ENCODE measurements at regions of chr16 and their contacts with region 1.

Region 1: DNA sequence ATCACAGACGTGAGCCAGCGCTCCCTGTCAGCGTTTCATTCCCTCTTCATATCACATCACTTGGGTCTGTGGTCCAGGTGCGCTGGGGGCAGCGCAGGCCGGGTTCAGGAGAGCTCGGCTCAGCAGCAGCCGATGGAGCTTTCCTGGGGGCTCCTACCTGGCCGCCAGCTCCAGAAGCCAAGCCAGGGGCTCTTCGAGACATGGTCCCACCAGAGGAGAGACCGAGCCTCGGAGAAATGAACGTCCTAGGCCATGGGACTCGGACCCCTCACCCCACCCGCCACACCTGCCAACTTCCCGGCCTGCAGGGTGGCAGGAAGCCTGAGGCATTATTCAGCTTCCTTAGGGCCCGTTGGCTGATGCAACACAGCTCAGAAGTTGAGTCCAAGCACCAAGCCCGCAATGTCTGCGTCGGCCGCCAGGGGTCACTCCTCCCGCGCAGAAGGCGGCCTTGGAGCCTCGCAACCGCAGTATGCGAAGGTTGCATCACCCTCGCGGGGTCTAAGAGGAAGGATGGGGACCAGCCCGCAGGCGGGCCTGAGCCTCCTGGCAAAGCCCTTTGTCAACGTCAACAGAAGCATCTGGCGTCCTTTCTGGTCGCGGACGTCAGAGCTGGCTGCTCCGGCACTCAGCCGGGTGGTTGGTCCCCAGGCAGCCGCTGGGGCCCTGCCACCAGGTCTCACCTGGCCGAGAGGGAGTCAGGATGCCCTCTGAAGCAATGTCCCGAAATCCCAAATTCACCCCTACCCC is 13.2 kb upstream of the KLHDC4 start:
- DNase-seq: peak; percentile 98
- ATAC-seq: peak; percentile 80
- H3K4me3 Mint-ChIP-seq: peak overlapping the region; percentile 76
- H3K27ac Mint-ChIP-seq: peak overlapping the region; percentile 98
- H3K4me1 Mint-ChIP-seq: peaks cover 46% of the 10 kb centered on the region
- H3K27me3 Mint-ChIP-seq: no peaks in the 10 kb centered on the region

Region 2: DNA sequence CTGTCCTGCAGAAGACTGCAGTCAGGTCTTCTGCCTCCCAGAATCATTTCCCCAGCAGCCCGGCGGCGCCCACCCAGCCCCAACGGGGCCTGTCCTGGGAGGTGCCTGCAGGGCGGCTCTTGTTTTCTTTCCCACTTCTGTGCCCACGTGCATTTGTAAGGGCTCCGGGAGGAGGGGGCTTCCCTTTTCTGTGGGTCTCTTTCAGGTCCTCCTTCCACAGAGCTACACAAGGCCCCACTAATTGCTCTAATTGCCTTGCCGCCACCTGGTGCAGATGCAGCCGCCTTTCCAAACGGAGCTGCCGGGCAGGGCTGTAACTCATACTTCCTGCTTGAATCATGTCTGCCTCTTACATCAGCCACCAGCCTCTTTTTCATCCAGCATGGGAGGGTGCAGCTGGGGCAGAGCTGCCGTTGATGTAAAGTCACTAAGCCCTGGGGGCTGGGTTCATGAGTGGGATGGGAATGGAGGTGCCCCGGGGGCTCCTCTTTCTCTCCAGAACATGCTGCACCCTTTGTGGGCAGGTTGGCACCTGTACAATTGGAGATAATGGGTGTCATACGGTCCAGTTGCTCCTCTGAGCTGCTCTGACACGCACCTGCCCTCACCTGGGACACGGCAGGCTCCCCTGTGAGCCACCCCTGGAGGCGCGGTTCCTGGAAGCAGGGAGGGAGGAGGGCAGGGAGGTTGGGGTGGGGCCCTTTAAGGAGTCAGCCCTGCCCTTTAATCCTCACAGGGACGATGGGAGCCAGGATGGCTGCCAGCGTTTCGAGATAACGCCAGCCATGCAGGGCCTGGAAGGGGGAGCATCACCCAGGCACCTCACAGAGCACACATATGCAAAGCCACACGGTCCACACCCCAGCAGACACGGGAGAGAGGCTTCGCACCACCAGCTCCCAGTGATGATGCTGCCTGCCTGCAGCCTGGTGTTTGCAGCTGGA is 27.9 kb after region 1 on chr16:
- POLR2A ChIA-PET with region 1: interaction called, 81 read pairs
- DNase-seq: peak; percentile 72
- ATAC-seq: peak; percentile 87
- H3K4me3 Mint-ChIP-seq: peak overlapping the region; percentile 83
- H3K27ac Mint-ChIP-seq: peak overlapping the region; percentile 100
- H3K4me1 Mint-ChIP-seq: peaks cover 29% of the 10 kb centered on the region
- H3K27me3 Mint-ChIP-seq: no peaks in the 10 kb centered on the region

Region 3: GRCh38 chr16:87860553-87861299 is 81.7 kb after region 1 on chr16:
- POLR2A ChIA-PET with region 1: interaction called, 191 read pairs
- DNase-seq: no peak
- ATAC-seq: no peak
- H3K4me3 Mint-ChIP-seq: peak overlapping the region; percentile 35
- H3K27ac Mint-ChIP-seq: peak overlapping the region; percentile 81
- H3K4me1 Mint-ChIP-seq: peaks cover 40% of the 10 kb centered on the region
- H3K27me3 Mint-ChIP-seq: no peaks in the 10 kb centered on the region

Region 4: DNA sequence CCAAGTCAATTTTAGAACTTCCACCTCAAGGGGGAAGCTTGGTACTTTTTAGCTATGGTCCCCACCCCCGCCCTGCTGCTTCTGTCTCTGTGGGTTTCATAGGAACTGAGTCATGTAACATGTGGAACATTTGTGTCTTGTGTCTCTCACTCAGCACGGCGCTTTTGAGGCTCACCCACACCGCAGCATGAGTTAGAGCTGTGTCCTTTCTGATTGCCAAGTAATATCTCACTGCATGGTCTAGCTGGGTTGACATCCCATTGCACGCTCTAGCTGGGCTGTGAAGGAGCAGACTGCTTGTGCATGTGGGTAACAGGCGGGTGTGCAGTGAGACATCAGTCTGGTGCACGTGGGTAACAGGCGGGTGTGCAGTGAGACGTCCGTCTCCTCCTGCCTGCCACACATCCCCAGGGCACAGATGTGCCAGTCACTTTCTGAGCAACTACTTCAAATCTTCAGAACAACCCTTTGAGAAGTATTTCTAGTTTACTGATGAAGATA is 116.7 kb after region 1 on chr16:
- POLR2A ChIA-PET with region 1: interaction called, 19 read pairs
- DNase-seq: peak; percentile 77
- ATAC-seq: peak; percentile 83
- H3K4me3 Mint-ChIP-seq: peak overlapping the region; percentile 73
- H3K27ac Mint-ChIP-seq: peak overlapping the region; percentile 96
- H3K4me1 Mint-ChIP-seq: peaks cover 38% of the 10 kb centered on the region
- H3K27me3 Mint-ChIP-seq: no peaks in the 10 kb centered on the region

Region 5: GRCh38 chr16:87956365-87957231 is 177.6 kb after region 1 on chr16:
- POLR2A ChIA-PET with region 1: interaction called, 15 read pairs
- DNase-seq: peak; percentile 71
- ATAC-seq: peak; percentile 65
- H3K4me3 Mint-ChIP-seq: peak overlapping the region; percentile 84
- H3K27ac Mint-ChIP-seq: peak overlapping the region; percentile 97
- H3K4me1 Mint-ChIP-seq: peaks cover 51% of the 10 kb centered on the region
- H3K27me3 Mint-ChIP-seq: no peaks in the 10 kb centered on the region